AG04449 (cell line): ENCODE measurements at regions of chr17 and their contacts with region 1.

Region 1: DNA sequence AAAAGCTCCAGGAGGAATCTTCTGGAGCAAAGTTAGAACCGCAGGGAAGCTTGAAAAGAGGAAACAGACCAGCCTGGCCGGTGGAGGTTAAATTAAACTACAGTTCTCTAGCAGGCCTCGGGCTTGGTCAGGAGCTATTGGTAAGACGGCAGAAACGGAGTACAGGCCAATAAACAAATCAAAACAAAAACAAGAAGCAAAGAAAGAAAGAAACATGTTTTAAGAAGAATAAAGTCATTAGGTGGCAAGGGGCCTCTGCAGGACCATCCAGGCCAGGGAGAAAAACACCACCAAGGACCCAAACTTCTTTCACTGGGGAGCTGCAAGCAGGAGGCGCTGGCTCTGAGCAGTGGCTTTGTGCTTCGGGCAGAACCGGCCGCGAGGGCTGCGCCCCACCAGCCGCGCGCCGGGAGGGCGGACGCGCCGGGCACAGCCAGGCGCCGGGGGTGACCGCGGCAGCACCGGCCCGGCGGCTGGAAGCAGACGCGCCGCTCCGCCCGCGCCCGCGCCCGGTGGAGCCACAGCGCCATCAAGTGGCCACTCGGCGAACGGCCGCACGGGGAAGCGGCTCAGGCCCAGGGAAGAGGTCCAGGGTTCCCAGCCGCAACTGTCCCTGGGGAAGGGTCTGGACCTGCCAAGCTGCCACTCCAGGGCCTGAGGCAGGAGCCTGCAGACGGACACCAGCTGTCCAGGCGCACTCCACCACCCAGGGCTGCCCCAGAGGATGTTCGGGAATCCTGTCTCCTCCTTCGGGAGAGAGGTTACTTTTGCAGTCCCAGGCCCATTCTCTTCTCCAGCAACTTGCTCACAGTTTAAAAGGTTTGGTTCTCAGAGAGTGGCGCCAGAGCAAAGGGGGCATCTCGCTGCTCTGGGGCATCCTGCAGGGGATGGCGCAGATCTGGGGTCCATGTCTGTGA is 419.4 kb downstream of the SOX9 start:
- DNase-seq: no peak
- H3K4me3 ChIP-seq: peak overlapping the region; percentile 40
- CTCF ChIP-seq: peak; percentile 90

Region 2: DNA sequence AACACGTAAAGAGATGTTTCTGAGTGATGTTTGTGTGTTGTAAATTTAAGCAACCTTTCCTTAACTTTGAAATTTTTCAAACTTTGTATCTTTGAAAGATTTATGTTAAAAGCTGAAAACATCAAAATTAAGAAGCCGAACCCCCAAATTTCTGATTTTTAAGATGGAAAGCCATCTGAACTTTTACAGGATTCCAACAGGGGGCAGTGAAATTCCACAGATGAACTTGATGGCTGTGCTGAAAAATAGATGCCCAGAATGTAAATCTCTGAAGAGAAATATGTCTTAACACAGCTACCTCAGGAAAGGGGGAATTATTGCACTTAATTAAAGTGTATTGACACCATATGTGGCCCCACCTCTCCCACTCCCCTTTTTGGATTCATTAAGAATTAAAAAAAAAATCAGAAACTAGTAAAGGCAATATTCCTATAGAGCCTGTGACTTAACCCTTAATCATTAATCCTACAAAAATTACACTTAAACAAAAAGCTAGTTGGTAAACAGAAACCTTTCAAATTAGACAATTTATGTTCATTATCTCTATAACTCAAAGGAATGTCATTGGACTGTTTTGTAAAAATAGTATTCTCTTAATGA is 1773.0 kb before region 1 on chr17:
- CTCF ChIA-PET with region 1: interaction called, 68 read pairs
- POLR2A ChIA-PET with region 1: no interaction called
- DNase-seq: no peak
- H3K4me3 ChIP-seq: no peak overlapping the region
- CTCF ChIP-seq: peak; percentile 36

Region 3: DNA sequence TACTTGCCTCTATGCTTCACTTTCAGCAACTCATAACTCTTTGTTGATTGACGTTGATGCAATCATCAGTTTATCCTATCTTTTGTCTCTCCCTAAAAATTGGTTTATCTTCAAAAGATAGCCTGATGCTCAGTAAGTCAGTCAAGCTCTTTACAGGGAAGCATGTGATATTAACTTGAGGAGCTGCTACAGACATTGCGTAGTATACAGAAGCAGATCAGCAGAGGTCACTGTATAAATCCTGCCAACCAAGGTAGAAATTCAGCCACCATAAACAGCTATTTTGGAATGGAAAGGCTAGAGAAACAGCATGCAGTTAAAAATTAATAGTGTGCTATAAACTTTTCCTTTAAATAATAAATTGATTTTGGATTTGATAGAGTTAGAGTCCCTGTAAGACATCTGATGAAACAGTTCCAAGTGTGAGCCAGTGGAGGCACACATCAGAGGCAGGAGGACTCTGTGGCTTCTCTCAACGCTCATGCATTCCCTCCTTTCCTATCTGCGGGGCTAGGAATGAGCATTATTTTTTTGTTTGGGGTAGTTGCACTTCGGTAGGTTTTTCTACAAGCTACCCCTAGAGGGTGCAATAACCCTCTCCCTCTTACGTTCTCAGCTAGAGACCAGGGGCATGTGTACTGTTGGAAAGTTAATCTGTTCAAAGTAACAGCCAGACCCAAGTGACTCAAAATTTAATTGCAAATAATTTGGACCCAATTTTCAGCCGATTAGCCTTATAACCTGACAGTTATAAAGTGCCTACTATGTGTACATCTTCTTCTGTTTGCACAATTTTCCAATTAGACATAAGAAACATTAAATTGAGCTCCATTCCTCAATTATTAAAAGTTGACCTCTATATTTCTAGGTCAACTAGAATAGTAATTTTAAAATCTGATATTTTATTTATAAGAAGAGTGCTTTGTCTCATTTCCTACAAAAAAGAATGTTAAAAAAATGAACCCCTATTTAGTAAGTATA is 1067.1 kb before region 1 on chr17:
- CTCF ChIA-PET with region 1: interaction called, 12 read pairs
- POLR2A ChIA-PET with region 1: no interaction called
- DNase-seq: no peak
- H3K4me3 ChIP-seq: no peak overlapping the region
- CTCF ChIP-seq: peak; percentile 63

Region 4: DNA sequence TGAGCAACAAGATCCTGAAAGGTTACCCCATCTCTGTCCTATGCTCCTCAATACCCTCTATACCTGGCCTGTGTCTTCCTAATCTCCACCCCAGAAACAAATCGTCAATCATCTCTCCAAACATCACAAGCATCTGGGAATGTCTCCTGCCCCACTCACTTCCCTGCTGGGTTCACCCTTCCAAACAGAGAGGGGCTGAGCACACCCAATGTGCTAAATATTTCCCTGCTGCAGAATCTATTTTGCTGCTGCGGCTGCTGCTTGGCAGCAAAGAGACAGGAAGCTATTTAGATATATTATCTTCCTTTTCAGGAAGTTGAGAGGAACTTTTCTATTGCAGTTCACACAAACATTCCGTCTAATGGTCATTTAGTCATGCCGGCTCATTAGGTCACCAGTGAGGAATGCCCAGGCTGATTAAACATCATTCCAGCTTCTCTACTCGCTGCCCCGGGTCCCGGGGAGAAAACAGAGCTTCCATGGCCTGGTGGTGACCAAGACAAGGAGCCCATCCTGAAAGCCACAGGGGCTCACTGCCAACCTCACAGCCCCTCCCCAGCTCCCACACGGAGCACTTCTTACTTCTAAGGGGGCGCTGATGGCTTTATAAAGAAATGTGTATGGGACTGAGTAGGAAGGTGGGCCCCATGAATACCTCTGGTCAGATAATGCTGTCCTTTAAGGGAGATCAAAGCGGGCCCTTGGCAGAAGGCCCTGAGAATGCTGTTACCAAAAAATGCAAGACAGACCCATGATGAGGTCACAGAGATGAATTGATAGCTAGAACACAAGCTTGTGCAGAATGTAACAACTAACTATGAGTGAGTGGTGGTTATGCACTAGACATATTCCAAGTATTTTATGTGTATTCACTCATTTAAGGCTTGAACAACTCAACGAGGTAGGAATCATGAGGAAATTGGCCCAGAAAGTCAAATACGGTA is 201.1 kb before region 1 on chr17:
- CTCF ChIA-PET with region 1: interaction called, 23 read pairs
- POLR2A ChIA-PET with region 1: interaction called, 3 read pairs
- DNase-seq: peak; percentile 83
- H3K4me3 ChIP-seq: no peak overlapping the region; the same call in 1 of the 2 replicates
- CTCF ChIP-seq: no peak

Region 5: DNA sequence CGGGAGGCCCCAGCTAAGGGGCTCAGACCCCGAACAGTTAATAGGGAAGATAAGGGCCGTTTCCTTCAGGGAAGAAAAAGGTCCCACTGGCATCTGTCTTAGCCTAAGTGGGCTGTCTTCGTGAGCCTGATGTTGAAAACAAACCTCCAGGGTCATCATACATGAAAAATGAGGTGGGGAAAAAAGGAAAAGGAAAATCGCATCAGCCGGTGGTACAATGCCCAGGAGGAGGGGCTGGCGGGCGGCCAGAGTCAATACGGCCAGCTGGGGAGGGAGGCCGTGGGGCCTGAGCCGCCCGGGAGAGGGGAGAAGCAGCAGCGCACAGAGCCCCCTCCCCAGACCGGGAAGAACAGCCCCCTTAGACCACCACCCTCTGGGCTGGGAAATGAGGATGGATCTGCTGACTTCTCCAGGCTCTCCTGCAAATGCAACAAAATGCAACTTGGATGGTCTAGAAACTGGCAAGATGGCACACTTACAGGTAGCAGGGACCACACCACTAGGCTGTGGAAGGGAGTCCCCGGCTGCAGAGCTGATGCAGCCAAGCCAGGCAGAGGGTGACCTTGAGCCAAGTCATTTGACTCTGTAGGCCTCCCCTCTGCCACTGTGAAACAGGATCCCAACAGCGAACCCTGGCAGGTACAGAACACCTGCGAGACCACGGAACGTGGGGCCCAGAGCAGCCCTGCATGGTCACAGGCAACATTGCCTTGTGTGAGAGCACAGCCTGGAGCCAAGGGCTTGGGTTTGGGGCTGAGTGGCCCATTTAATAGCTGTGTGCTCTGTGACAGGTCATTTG is 29.1 kb after region 1 on chr17:
- CTCF ChIA-PET with region 1: no interaction called
- POLR2A ChIA-PET with region 1: no interaction called
- DNase-seq: no peak
- H3K4me3 ChIP-seq: no peak overlapping the region
- CTCF ChIP-seq: no peak